ENCODE measurements at regions of chr19 and their contacts with region 1.

Region 1: GRCh38 chr19:38658462-38659306 is 11.2 kb downstream of the ACTN4 start:
- DNase-seq: no peak
- ATAC-seq: peak; percentile 72

Region 2: GRCh38 chr19:38707512-38708114 is 48.9 kb after region 1 on chr19:
- intact Hi-C with region 1: loop called (anchors 10 kb)
- DNase-seq: peak; percentile 75
- ATAC-seq: peak; percentile 21

Region 3: GRCh38 chr19:38831142-38831605 is 172.5 kb after region 1 on chr19:
- intact Hi-C with region 1: loop called (anchors 10 kb)
- DNase-seq: peak; percentile 87
- ATAC-seq: peak; percentile 75

Measured in left ventricle myocardium superior (tissue), 1 donor.